Activated CD8-positive, alpha-beta T cell treated with anti-CD3 and anti-CD28 coated beads, Interleukin-2, amount 10 ng/mL, durations not matched to agents 7 days and 5 days (primary cell): ENCODE measurements at regions of chr19 and their contacts with region 1.

Region 1: DNA sequence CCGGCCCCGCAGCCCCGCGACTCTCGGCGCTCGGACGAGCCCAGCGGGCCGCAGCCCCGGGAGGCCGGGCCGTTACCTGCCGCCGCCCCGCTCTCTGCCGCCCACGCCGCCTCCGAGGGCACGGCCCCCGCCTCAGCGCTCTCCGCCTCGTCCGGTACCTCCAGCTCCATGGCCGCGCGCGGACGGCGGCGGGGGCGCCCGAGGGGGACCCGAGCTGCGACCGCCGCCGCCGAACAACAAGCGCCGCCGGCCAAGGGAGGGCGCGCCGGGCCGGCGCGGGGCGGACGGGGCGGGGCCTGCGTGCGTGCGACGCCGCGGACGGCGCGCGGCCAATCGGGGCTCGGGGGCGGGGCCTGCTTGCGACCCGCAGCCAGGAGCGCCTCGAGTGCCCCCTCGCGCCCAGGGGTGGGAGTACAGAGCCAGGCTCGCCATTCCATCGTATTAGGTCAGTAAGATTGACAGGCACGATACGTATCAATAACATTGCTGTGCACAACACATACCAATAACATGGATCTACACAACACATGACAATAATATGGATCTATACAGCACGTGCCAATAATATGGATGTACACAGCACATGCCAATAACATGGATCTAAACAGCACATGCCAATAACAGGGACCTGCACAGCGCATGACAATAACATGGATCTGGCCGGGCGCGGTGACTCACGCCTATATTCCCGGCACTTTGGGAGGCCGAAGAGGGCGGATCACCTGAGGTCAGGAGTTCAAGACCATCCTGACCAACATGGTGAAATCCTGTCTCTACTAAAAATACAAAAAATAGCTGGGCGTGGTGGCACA is at the start of gene PIP5K1C:
- DNase-seq: peak; percentile 93
- ATAC-seq: peak; percentile 95
- H3K4me3 Mint-ChIP-seq: peak within 1 kb of the TSS; percentile 89
- H3K27ac Mint-ChIP-seq: peak within 1 kb of the TSS; percentile 75
- H3K4me1 Mint-ChIP-seq: peaks cover 22% of the 10 kb centered on the region
- H3K27me3 Mint-ChIP-seq: no peaks in the 10 kb centered on the region
- total RNA-seq, gene PIP5K1C: 19.7 to 20.0 TPM

Region 2: DNA sequence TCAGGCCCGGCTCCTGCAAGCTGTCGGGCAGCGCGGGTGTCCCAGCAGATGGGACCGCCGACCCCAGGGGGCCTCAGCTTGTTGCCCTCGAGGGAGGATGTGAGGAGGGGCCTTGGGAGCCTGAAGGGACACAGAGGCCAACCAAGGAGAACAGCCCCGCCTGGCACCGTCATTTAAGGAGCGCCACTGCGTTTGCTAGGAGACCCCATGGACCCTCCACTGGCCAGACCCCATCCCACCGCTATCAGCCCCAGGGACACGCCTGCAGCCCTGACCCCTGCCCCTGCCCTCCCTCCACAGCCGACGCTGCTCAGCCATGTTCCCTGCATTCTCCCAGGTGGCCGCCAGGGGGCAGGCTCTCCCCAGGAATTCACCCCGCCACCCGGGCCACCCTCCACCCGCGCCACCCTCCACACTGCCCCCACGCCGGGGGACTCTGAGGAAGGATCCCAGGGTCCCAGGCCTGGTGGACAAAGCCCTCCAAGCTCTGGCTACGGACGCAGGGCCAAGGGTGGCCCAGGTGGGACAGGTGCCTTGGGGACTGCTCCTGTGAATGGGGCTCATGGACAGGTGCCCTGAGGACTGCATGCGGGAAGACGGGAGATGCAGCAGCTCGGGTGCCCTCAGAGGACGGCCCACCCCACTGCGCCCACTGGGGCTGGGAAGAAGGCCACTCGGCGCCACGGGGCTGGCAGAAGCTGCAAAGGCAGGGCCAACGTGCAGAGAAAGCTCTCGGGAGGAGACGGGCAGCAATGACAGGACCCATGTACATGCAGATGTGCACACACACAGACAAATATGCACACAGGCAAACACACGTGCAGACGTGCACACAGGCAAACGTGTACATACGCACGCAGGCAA is 34.5 kb before region 1 on chr19:
- CTCF ChIA-PET with region 1: interaction called, 15 read pairs
- POLR2A ChIA-PET with region 1: interaction called, 3 read pairs
- DNase-seq: peak; percentile 80
- ATAC-seq: peak; percentile 84
- H3K4me3 Mint-ChIP-seq: no peak overlapping the region
- H3K27ac Mint-ChIP-seq: no peak overlapping the region
- H3K4me1 Mint-ChIP-seq: peaks cover 14% of the 10 kb centered on the region
- H3K27me3 Mint-ChIP-seq: no peaks in the 10 kb centered on the region

Region 3: DNA sequence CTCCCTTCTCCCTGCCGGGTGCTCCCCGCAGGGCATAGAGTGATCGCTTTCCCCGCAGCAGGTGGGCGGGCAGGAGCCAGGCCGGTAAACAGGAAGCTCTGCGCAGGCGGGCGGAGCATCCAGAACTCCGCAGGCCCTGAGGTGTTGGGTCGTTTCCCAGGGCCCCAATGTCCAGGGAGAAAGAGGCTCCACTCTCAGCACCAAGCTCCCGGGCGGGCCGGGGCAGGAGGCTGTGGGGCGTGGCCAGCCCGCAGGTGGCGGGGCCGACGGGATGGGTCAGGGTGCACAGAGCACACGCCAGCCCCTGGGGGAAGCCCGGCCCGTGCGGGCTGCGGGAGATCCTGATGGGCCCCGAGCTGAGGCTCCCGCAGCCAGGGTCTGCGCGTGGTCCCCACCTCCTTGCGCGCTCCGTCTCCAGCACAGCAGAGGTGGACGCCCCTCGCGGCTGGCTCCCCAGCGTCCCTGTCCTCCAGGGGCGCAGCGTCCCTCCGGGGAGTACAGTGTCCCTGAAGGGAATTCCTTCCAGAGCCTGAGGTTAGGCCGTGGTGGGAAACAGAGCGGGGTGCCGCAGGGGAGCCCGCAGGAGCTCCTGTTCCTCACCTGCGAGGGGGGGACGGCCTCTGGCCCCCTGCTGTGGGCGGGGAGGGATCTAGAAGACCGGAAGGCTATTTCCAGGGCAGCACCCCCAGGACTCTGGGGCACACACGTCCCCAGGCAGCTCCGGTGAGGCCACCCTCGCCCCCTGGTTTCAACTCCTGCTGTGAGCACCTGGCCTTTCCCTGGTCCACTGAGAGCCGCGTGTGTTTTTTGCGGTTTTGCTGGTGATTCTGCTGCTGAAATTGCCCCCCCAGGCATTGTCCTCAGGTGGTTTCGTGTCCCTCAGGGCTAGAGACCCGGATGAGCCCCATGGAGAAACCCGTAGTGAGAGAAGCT is 12.4 kb before region 1 on chr19:
- CTCF ChIA-PET with region 1: interaction called, 10 read pairs
- POLR2A ChIA-PET with region 1: interaction called, 7 read pairs
- DNase-seq: peak; percentile 61
- ATAC-seq: peak; percentile 79
- H3K4me3 Mint-ChIP-seq: peak overlapping the region; percentile 45
- H3K27ac Mint-ChIP-seq: peak overlapping the region; percentile 68
- H3K4me1 Mint-ChIP-seq: peaks cover 41% of the 10 kb centered on the region
- H3K27me3 Mint-ChIP-seq: no peaks in the 10 kb centered on the region